ENCODE measurements at regions of chr15 and their contacts with region 1.

Region 1: DNA sequence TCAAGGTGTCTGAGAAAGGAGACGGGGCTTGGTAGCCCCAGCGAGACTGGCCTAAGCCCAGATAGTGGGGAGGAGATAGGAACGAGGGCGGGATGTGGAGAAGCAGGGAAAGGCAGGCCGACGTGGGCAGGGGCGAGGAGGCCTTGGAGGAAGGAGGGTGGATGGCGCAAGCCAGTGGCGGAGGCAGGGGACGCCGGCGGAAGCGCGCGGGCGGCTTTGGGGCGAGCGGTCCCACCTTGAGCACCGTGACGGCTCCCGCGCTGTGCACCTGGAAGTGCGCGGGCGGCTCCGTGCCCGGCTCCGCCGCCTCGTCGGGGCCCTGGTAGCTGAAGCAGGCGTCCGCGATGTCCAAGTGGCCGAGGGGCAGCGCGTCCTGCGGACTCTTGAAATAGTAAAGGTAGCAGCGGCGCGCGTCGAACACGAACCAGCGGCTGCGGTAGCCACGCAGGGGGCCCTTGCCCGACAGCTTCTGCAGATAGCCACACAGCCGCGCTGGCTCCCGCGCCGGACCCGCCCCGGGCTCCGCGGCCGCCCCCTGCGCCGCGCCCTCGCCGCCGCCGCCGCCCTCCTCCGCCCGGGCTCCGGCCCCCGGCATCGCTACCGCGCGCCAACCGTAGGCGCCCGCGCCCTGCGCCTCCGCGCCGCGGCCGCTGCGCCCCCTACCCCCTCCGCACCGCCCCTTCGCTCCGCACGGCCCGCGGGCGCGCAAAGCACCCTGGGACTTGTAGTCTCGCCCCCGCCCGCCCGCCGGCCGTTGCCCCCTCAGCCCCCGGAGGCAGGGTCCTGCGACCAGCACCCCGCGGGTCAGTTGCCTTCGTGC is at the start of gene TBC1D2B:
- DNase-seq: peak; percentile 66
- H3K4me3 Mint-ChIP-seq: peak within 1 kb of the TSS; percentile 100
- H3K27ac Mint-ChIP-seq: peak within 1 kb of the TSS; percentile 95
- H3K4me1 Mint-ChIP-seq: peaks cover 43% of the 10 kb centered on the region
- H3K27me3 Mint-ChIP-seq: no peaks in the 10 kb centered on the region
- total RNA-seq, gene TBC1D2B: 60.8 and 64.7 TPM in 2 replicates

Region 2: DNA sequence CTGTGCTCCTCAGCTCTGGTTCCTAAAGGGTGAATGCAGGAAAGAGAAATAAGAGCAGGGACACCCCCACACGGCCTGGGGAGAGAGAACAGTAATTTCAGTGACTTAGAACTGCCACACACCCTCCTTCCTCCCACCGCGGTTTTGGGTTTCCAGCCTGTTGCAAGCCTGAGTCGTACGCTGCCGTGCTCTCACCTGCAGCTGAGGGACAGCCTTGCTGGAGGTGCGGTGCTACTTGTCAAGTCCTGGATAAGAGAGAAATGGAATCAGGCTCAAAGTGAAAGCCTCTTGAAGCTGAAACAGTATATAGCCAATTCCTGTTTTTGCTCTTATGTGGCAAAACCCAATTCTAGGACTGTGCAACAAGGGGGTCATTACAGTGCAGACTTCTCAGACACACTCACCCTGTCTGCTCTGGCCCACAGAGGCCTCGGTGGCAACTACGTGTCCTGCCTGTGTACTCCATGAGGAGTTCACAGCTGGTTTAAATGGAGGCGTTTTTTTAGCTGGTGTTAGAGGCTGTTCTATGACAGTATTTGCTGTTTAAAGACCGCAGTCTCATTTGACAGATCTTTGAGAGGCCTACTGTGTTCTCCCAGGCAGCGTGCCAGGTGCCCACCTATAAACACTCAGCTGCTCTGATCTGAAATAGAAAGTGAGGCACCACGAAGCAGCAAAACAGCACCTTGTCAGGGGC is 42.6 kb before region 1 on chr15:
- intact Hi-C with region 1: loop called (anchors 1 kb)
- DNase-seq: peak; percentile 79
- H3K4me3 Mint-ChIP-seq: peak overlapping the region; percentile 17
- H3K27ac Mint-ChIP-seq: peak overlapping the region; percentile 84
- H3K4me1 Mint-ChIP-seq: peaks cover 84% of the 10 kb centered on the region
- H3K27me3 Mint-ChIP-seq: no peaks in the 10 kb centered on the region

Region 3: DNA sequence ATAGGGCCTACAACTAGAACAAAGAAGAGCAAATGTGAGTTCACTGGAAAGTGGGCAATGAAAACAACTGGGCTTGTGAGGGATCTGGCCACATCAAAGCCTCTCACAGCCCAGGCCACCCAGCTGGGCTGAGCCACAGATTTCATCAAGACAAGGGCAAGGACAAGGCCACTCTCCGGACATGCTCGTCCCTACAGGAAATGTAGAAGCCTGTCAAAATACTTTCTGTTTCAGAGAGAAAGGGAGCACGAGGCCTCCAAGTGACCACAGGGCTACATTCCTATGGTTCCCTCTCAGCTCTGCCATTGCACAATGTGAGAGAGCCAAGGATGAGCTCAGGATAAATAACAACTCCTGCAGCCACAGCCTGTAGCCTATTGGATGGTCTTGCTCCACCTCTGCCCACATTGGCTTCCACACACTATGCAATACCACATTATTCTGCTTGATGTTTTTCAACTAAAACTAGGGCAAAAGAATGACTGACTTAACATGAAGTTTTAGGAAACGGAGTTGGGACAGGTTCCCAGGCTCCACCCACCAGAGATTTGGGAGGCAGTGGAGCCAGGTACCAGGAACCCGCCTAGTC is 11.9 kb before region 1 on chr15:
- intact Hi-C with region 1: loop called (anchors 1 kb)
- DNase-seq: no peak
- H3K4me3 Mint-ChIP-seq: peak overlapping the region; percentile 9
- H3K27ac Mint-ChIP-seq: no peak overlapping the region
- H3K4me1 Mint-ChIP-seq: no peaks in the 10 kb centered on the region
- H3K27me3 Mint-ChIP-seq: no peaks in the 10 kb centered on the region

Region 4: GRCh38 chr15:78093242-78094020 is 16.2 kb after region 1 on chr15:
- intact Hi-C with region 1: no loop called
- DNase-seq: no peak
- H3K4me3 Mint-ChIP-seq: no peak overlapping the region
- H3K27ac Mint-ChIP-seq: no peak overlapping the region
- H3K4me1 Mint-ChIP-seq: peaks cover 41% of the 10 kb centered on the region
- H3K27me3 Mint-ChIP-seq: no peaks in the 10 kb centered on the region

Region 5: GRCh38 chr15:78761891-78762385 is 684.7 kb after region 1 on chr15:
- intact Hi-C with region 1: no loop called
- DNase-seq: no peak
- H3K4me3 Mint-ChIP-seq: no peak overlapping the region
- H3K27ac Mint-ChIP-seq: peak overlapping the region; percentile 89
- H3K4me1 Mint-ChIP-seq: peaks cover 17% of the 10 kb centered on the region
- H3K27me3 Mint-ChIP-seq: no peaks in the 10 kb centered on the region

Measured in activated T-helper 1 cell treated with anti-CD3 and anti-CD28 coated beads, Interleukin-12 subunit alpha, Interleukin-12 subunit beta, Interleukin-2, Interleukin-4 antibody, amounts not matched to agents 30 ng/mL and 10 ng/mL and 1 ng/mL, durations not matched to agents 14 hours and 24 hours and 36 hours (primary cell).